ENCODE measurements at regions of chr6 and their contacts with region 1.

Region 1: DNA sequence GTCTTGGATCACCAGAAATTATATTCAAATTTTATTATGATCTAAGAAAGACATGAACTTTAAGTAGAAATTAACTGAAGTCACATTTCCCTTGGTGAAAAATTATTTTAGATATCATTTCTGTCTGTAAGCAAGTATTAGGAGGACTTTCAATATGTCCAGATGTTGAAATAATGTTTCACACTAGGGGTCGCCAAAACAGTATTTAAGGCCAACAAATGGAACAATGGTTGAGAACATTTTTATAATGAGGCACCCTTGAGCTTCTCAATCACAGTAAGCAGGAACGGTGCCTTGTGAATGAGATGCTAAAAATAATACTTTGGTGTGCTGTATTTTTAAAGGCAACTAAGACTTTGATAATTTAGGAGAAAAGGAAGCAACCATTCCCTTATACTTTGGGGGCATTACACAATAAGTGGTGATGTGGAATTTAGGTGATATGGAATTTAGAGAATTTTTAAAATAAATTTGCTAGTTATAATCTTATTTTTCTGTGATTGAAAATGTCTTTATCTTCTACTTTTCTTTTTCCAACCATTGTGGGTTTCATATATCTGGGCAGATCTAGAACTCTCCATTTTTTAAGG is 9.6 kb upstream of the SF3B5 start:
- DNase-seq: no peak
- H3K4me3 Mint-ChIP-seq: no peak overlapping the region
- H3K27ac Mint-ChIP-seq: peak overlapping the region; percentile 53
- H3K4me1 Mint-ChIP-seq: peaks cover 7% of the 10 kb centered on the region
- H3K27me3 Mint-ChIP-seq: no peaks in the 10 kb centered on the region

Region 2: DNA sequence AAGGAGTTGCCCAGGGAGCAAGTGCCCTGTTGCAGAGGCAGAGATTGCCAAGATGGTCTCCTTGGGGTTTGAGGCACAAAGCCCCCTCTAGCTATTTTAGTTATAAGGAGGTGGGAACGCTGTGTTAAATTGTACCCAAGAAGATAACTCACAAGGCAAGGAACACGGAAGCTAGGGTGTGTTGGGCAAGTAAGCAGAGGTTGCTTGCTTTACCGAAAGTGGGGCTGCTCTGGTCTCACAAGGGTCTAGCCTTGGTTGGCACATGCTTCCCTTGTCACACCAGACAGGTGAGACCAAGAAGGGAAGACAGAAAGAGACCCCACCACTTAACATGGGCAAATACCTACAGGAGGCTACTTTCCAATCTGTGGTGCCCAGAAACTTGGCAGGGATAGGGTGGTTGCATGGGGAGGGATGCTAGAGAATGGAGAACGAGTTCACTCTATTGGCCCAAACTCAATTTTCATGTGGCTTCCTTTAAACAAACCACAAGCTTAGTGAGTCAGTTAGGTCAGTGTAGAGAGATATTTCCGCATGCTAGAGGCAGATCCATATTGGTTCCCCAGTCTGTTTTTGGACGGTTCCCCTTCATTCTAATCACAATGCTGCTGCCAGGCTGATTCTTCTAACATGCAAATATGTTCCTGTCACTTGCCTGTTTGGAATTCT is 139.4 kb before region 1 on chr6:
- CTCF ChIA-PET with region 1: no interaction called
- POLR2A ChIA-PET with region 1: no interaction called
- intact Hi-C with region 1: no loop called
- DNase-seq: no peak
- H3K4me3 Mint-ChIP-seq: no peak overlapping the region
- H3K27ac Mint-ChIP-seq: no peak overlapping the region
- H3K4me1 Mint-ChIP-seq: no peaks in the 10 kb centered on the region
- H3K27me3 Mint-ChIP-seq: no peaks in the 10 kb centered on the region

Region 3: DNA sequence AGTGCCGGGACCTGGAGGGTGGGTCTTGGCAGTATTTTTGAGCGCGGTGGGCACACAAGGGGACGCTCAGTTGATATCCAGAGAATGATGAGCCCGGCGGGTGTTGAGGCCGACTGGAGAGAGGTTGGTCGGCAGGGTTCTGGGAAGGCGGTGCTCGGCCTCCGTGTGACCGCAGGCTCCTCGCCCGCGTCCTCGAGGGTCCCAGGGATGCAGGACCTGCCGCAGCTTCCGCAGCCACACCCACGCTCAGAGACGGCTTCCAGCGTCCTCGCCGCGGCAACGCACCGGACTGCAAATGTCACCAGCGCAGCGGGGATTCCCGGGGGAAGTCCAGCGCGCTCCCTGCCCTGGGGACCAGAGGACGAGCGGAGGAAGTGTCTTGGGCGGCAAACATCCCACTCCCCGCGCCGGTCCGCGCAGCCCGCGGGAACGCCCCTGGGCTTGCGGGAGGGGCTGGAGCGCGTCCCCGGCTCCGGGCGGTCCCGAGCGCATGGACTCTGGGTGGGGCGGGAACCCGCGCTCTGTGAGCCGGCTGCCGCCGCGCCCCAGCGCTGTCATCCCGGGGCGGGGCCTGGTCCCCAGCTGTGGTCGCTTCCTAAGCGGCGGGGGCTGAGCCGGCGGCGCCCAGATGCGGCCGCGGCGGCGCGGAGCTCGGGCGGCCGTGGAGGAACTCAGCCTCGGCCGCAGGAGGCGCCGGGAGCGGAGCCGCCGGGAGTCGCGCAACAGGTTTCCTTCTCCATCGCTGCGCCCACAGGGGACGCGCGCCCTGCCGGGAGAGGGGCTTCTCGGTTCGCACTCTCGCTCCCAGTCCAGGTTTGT is 45.1 kb after region 1 on chr6 and contains the start of gene STX11:
- CTCF ChIA-PET with region 1: interaction called, 3 read pairs
- POLR2A ChIA-PET with region 1: no interaction called
- intact Hi-C with region 1: loop called (anchors 2 kb)
- DNase-seq: peak; percentile 88
- H3K4me3 Mint-ChIP-seq: peak within 1 kb of the TSS; percentile 88
- H3K27ac Mint-ChIP-seq: peak within 1 kb of the TSS; percentile 98
- H3K4me1 Mint-ChIP-seq: peaks cover 41% of the 10 kb centered on the region
- H3K27me3 Mint-ChIP-seq: no peaks in the 10 kb centered on the region
- total RNA-seq, gene STX11: 16.0 to 16.6 TPM

Region 4: GRCh38 chr6:144179828-144180227 is 74.8 kb after region 1 on chr6:
- CTCF ChIA-PET with region 1: interaction called, 3 read pairs
- POLR2A ChIA-PET with region 1: no interaction called
- intact Hi-C with region 1: loop called (anchors 2 kb)
- DNase-seq: no peak
- H3K4me3 Mint-ChIP-seq: no peak overlapping the region
- H3K27ac Mint-ChIP-seq: no peak overlapping the region
- H3K4me1 Mint-ChIP-seq: peaks cover 52% of the 10 kb centered on the region
- H3K27me3 Mint-ChIP-seq: no peaks in the 10 kb centered on the region

Region 5: GRCh38 chr6:144223686-144224085 is 118.7 kb after region 1 on chr6:
- CTCF ChIA-PET with region 1: interaction called, 81 read pairs
- POLR2A ChIA-PET with region 1: no interaction called
- intact Hi-C with region 1: loop called (anchors 1 kb)
- DNase-seq: no peak
- H3K4me3 Mint-ChIP-seq: no peak overlapping the region
- H3K27ac Mint-ChIP-seq: no peak overlapping the region
- H3K4me1 Mint-ChIP-seq: peaks cover under 1% of the 10 kb centered on the region
- H3K27me3 Mint-ChIP-seq: no peaks in the 10 kb centered on the region

Region 6: GRCh38 chr6:144482142-144482541 is 377.1 kb after region 1 on chr6:
- CTCF ChIA-PET with region 1: interaction called, 35 read pairs
- POLR2A ChIA-PET with region 1: no interaction called
- intact Hi-C with region 1: loop called (anchors 1 kb)
- DNase-seq: peak; percentile 83
- H3K4me3 Mint-ChIP-seq: no peak overlapping the region
- H3K27ac Mint-ChIP-seq: no peak overlapping the region
- H3K4me1 Mint-ChIP-seq: peaks cover 10% of the 10 kb centered on the region
- H3K27me3 Mint-ChIP-seq: no peaks in the 10 kb centered on the region

Region 7: GRCh38 chr6:144931172-144932035 is 826.4 kb after region 1 on chr6:
- CTCF ChIA-PET with region 1: no interaction called
- POLR2A ChIA-PET with region 1: no interaction called
- intact Hi-C with region 1: loop called (anchors 10 kb)
- DNase-seq: peak; percentile 48
- H3K4me3 Mint-ChIP-seq: no peak overlapping the region
- H3K27ac Mint-ChIP-seq: no peak overlapping the region
- H3K4me1 Mint-ChIP-seq: no peaks in the 10 kb centered on the region
- H3K27me3 Mint-ChIP-seq: no peaks in the 10 kb centered on the region

Region 8: GRCh38 chr6:145214570-145214969 is 1109.6 kb after region 1 on chr6:
- CTCF ChIA-PET with region 1: no interaction called
- POLR2A ChIA-PET with region 1: no interaction called
- intact Hi-C with region 1: loop called (anchors 10 kb)
- DNase-seq: no peak
- H3K4me3 Mint-ChIP-seq: no peak overlapping the region
- H3K27ac Mint-ChIP-seq: no peak overlapping the region
- H3K4me1 Mint-ChIP-seq: peaks cover 8% of the 10 kb centered on the region
- H3K27me3 Mint-ChIP-seq: peaks cover 4% of the 10 kb centered on the region